Activated CD4-positive, alpha-beta T cell treated with anti-CD3 and anti-CD28 coated beads, Interleukin-2, amount 10 ng/mL, durations not matched to agents 24 days and 14 days (primary cell): ENCODE measurements at regions of chrX and their contacts with region 1.

Region 1: DNA sequence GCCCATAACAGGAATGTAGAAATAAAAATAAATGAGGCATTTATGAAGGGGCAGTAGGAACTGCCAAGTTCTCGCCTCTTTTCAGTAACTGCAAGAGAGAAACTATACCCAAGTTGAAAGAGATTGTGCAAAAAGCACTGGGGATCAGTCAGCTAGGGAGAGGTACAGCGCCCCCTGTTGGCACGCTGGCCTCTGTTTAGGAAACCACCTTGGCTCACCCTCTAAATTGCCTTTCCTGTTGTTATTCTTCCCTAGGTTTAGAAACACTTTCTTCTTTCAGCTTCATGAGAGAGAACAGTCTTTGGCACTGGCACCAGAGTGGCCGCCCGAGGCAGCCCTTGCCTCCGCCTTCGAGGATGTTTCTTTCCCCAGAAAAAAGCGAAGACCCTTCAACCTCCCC is 348.5 kb downstream of the MID1IP1 start:
- DNase-seq: peak; percentile 85
- H3K4me3 Mint-ChIP-seq: no peak overlapping the region
- H3K27ac Mint-ChIP-seq: no peak overlapping the region
- H3K4me1 Mint-ChIP-seq: peaks cover 2% of the 10 kb centered on the region
- H3K27me3 Mint-ChIP-seq: no peaks in the 10 kb centered on the region

Region 2: GRCh38 chrX:38754102-38754790 is 395.5 kb before region 1 on chrX:
- intact Hi-C with region 1: loop called (anchors 1 kb)
- DNase-seq: peak; percentile 71
- H3K4me3 Mint-ChIP-seq: no peak overlapping the region
- H3K27ac Mint-ChIP-seq: no peak overlapping the region
- H3K4me1 Mint-ChIP-seq: peaks cover 2% of the 10 kb centered on the region
- H3K27me3 Mint-ChIP-seq: no peaks in the 10 kb centered on the region

Region 3: DNA sequence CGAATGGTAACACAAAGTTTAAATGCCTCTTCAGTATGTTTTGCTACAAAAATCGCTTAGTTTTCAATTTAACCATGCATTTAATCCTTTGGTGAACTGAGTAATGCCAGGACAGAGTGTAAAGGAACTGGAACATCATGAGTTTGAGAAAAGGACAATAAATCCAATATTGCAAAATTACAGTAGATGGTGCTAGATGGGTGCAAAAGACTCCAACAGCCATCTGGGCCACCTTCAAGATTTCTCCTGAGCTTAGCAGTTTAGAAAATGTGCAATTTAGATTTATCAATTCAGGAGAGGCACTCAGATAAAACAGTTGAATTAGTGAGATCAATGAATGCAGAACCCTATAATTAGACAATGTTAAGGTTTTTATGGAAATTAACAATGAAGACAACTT is 381.7 kb before region 1 on chrX:
- intact Hi-C with region 1: loop called (anchors 5 kb)
- DNase-seq: peak; percentile 54
- H3K4me3 Mint-ChIP-seq: no peak overlapping the region
- H3K27ac Mint-ChIP-seq: no peak overlapping the region
- H3K4me1 Mint-ChIP-seq: no peaks in the 10 kb centered on the region
- H3K27me3 Mint-ChIP-seq: no peaks in the 10 kb centered on the region

Region 4: DNA sequence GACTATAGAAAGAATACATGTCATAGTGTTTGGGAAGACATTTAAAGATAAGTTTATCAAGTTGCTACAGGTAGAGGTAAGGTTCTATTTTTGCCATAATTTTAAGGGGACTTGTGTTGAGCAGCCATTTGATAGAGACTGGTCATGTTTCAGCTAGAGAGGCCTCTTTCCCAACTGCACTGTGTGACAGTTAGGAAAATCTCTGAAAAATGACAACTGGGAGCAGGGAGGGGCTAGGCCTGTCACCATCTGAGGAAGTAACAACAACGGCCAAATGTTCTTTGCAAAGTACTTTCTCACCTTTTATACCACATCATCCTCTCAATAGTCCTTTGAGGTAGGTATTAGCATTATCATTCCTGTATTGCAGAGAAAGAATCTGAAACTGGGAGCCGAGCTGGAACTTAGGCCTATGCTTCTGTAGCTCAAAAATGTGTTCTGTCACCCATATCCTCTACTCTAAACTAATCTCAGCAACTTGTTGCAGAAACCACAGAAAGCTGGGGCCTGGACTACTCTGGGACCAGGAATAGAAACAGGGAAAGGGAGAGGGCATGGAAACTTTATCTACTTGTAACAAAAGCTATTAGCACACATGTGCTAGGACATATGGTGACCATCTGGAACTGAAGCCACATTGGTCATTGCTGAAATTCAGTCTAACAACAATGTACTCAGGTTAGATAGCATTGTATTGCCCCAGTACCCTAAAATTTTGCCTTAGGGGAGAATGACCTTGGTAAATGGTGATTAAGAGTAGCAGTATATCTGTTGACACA is 149.6 kb before region 1 on chrX:
- intact Hi-C with region 1: no loop called
- DNase-seq: no peak
- H3K4me3 Mint-ChIP-seq: no peak overlapping the region
- H3K27ac Mint-ChIP-seq: no peak overlapping the region
- H3K4me1 Mint-ChIP-seq: no peaks in the 10 kb centered on the region
- H3K27me3 Mint-ChIP-seq: no peaks in the 10 kb centered on the region

Region 5: GRCh38 chrX:39012621-39013111 is 137.1 kb before region 1 on chrX:
- intact Hi-C with region 1: no loop called
- DNase-seq: no peak
- H3K4me3 Mint-ChIP-seq: no peak overlapping the region
- H3K27ac Mint-ChIP-seq: no peak overlapping the region
- H3K4me1 Mint-ChIP-seq: no peaks in the 10 kb centered on the region
- H3K27me3 Mint-ChIP-seq: no peaks in the 10 kb centered on the region

Region 6: DNA sequence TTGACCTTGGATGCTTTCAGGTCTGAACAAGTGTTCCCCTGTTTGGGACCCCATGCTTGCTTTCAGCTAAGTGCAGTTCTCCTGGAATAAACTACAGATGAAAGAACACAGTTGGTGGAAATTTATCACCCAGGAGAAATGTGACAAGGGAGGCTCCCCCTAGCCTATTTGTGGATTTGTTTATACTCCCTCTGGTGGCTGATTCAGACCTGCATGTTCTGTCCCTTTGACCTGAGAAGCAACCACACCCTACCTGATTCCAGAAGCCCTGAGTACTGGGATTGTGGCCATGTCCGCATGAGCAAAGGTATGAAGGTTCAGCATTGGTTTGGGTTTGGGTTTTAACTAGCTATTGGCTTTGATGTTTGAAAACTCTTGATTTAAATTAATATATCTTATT is 92.4 kb after region 1 on chrX:
- intact Hi-C with region 1: no loop called
- DNase-seq: peak; percentile 61
- H3K4me3 Mint-ChIP-seq: no peak overlapping the region
- H3K27ac Mint-ChIP-seq: no peak overlapping the region
- H3K4me1 Mint-ChIP-seq: peaks cover 19% of the 10 kb centered on the region
- H3K27me3 Mint-ChIP-seq: no peaks in the 10 kb centered on the region